ENCODE measurements at regions of chr1 and their contacts with region 1.

Region 1: GRCh38 chr1:48055876-48056764 is 58.9 kb upstream of the TRABD2B start:
- DNase-seq: no peak

Region 2: GRCh38 chr1:47656719-47657685 is 399.1 kb before region 1 on chr1:
- intact Hi-C with region 1: no loop called
- DNase-seq: peak; percentile 91

Region 3: GRCh38 chr1:47997289-47998200 is 58.6 kb before region 1 on chr1 and contains the start of gene TRABD2B:
- intact Hi-C with region 1: loop called in 1 of 2 experiments (anchors 5 kb)
- DNase-seq: peak; percentile 95
- total RNA-seq, gene TRABD2B: 10.5 to 16.4 TPM